Endothelial cell of umbilical vein (primary cell): ENCODE measurements at regions of chr3 and their contacts with region 1.

Region 1: DNA sequence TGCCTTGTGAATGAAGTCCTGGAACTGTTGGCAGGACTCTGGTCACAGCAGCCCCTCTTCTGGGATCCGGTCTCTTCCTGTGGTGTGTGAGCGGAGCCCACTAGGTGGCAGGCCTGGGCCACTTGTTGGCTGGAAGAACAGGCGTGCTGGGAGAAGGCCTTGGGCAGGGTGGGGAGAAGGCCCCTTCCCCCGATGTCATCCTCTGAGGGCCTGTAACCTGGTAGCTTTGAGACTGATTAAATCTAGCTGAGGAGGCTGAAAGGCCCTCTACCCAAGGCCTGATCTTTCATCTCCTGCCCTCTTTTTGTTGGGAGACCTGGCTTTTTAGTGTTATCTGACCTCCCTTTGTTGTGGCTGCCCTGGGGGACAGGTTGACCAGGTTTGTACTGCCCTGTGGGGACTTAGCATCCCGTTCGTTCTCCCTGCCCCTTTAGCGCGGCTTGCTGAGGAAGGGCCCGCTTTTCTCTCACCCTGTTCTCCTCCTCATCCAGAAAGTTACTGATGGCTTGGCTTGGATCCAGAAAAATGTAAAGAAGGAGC is 48.3 kb downstream of the CHCHD6 start:
- DNase-seq: peak; percentile 73
- H3K4me3 ChIP-seq: no peak overlapping the region
- H3K27ac ChIP-seq: no peak overlapping the region
- H3K4me1 ChIP-seq: no peaks in the 10 kb centered on the region
- H3K27me3 ChIP-seq: no peaks in the 10 kb centered on the region
- CTCF ChIP-seq: peak; percentile 82 to 92
- POLR2A ChIP-seq: no peak

Region 2: GRCh38 chr3:126679318-126679751 is 73.0 kb before region 1 on chr3:
- CTCF ChIA-PET with region 1: interaction called, 5 read pairs
- POLR2A ChIA-PET with region 1: no interaction called
- dilution Hi-C with region 1: no loop called
- intact Hi-C with region 1: loop called (anchors 2 kb)
- DNase-seq: peak; percentile 76
- H3K4me3 ChIP-seq: no peak overlapping the region
- H3K27ac ChIP-seq: no peak overlapping the region
- H3K4me1 ChIP-seq: no peaks in the 10 kb centered on the region
- H3K27me3 ChIP-seq: peaks cover 6 to 26% of the 10 kb centered on the region in 2 experiments
- CTCF ChIP-seq: peak; percentile 91 to 97
- POLR2A ChIP-seq: no peak

Region 3: DNA sequence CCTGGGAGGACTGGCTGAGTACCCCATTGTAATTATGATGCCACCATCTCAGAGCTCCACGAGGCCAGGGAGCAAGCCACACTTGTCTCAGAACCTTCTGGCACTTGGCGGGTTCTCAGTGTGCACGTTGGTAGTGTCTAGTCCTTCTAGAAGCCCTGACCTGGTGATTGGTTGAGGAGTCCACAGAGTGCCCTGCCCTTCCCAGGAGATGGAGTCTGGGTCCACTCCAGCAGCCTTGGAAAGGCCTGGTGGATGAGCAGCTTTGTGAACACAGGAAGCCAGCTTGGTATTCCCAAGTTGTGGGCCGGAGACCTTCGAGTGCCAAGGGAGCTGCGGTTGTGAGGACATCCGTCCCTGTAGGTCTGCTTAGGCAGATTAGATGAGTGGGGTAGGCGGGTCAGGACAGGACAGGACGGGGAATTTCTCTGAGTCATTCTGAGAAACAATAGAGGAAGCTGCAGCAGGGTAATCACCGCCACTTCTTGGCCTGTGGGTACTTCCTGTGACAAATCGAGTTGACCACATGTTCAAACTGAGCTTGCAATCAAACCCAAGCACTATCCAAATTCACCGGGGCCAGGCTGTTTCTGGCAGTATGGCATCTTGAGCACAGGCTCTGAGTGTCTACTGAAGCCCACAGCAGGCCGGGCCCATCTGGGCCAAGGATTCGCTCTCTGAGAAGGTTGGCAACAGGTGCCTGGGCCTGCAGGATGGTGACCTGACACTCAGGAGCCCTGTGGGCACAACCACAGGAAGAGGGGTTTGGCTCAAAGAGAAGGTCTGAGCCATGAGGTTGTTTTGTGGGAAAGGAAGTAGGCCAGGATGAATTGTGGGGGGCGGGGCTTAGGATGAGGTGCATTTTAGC is 159.0 kb after region 1 on chr3:
- CTCF ChIA-PET with region 1: interaction called, 4 read pairs
- POLR2A ChIA-PET with region 1: no interaction called
- dilution Hi-C with region 1: no loop called
- intact Hi-C with region 1: loop called (anchors 1 kb)
- DNase-seq: peak; percentile 96
- H3K4me3 ChIP-seq: no peak overlapping the region
- H3K27ac ChIP-seq: peak overlapping the region; percentile 59
- H3K4me1 ChIP-seq: peaks cover 24% of the 10 kb centered on the region
- H3K27me3 ChIP-seq: peaks cover 11 to 23% of the 10 kb centered on the region in 2 experiments
- CTCF ChIP-seq: no peak
- POLR2A ChIP-seq: peak; percentile 62

Region 4: DNA sequence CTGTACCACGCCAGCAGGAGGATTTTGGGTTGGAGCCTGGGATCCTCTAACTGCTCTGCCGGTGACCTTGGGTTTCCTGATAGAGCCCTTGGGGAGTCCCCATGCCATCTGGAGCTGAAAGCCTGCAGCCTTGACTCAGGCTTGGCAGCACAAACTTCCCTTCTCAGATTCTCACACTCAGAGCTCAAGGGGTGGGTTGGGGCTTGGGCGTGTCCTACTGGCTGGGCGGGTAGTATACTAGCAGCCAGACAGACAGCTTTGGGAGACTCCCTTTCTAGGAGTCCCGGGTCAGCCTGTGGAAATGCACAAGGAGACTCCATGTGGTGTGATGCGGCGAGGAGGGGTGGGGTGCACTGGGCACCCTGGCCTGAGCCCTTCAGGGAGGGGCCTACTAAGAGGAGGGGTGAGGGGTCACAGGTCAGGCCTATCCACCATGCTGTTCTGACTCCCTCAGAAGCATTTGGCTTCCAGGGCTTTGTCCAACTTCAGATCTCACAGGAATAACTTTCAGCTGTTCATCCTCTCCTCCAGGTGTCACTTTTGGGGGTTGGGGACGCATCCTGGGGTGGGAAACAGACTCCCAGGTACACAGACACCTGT is 208.9 kb after region 1 on chr3:
- CTCF ChIA-PET with region 1: interaction called, 19 read pairs
- POLR2A ChIA-PET with region 1: no interaction called
- dilution Hi-C with region 1: no loop called
- intact Hi-C with region 1: loop called (anchors 1 kb)
- DNase-seq: no peak
- H3K4me3 ChIP-seq: no peak overlapping the region
- H3K27ac ChIP-seq: no peak overlapping the region
- H3K4me1 ChIP-seq: peaks cover 4% of the 10 kb centered on the region
- H3K27me3 ChIP-seq: peaks cover 0 to 1% of the 10 kb centered on the region in 2 experiments
- CTCF ChIP-seq: no peak
- POLR2A ChIP-seq: no peak

Region 5: GRCh38 chr3:127002195-127003174 is 250.1 kb after region 1 on chr3:
- CTCF ChIA-PET with region 1: interaction called, 25 read pairs
- POLR2A ChIA-PET with region 1: no interaction called
- dilution Hi-C with region 1: no loop called
- intact Hi-C with region 1: loop called (anchors 1 kb)
- DNase-seq: peak; percentile 83
- H3K4me3 ChIP-seq: no peak overlapping the region
- H3K27ac ChIP-seq: peak overlapping the region; percentile 50
- H3K4me1 ChIP-seq: peaks cover 11% of the 10 kb centered on the region
- H3K27me3 ChIP-seq: no peaks in the 10 kb centered on the region
- CTCF ChIP-seq: peak; percentile 74 to 82
- POLR2A ChIP-seq: peak; percentile 32

Region 6: GRCh38 chr3:127544192-127544802 is 791.9 kb after region 1 on chr3:
- CTCF ChIA-PET with region 1: interaction called, 6 read pairs
- POLR2A ChIA-PET with region 1: no interaction called
- dilution Hi-C with region 1: no loop called
- intact Hi-C with region 1: loop called (anchors 1 kb)
- DNase-seq: peak; percentile 47
- H3K4me3 ChIP-seq: no peak overlapping the region
- H3K27ac ChIP-seq: no peak overlapping the region
- H3K4me1 ChIP-seq: peaks cover 4% of the 10 kb centered on the region
- H3K27me3 ChIP-seq: no peaks in the 10 kb centered on the region
- CTCF ChIP-seq: peak; percentile 80 to 89
- POLR2A ChIP-seq: no peak